Ascending aorta (tissue), 2 donors: ENCODE measurements at regions of chr9 and their contacts with region 1.

Region 1: GRCh38 chr9:37422289-37423104 is at the start of gene GRHPR:
- DNase-seq: peak; percentile 52 to 92
- H3K4me3 ChIP-seq: peak within 1 kb of the TSS; percentile 80 to 88
- H3K27ac ChIP-seq: peak within 1 kb of the TSS; percentile 77 to 86
- H3K4me1 ChIP-seq: peaks cover 8 to 18% of the 10 kb centered on the region in 2 donors
- H3K27me3 ChIP-seq: no peaks in the 10 kb centered on the region
- CTCF ChIP-seq: no peak
- total RNA-seq, gene GRHPR: 131 TPM

Region 2: GRCh38 chr9:36400332-36401163 is 1021.9 kb before region 1 on chr9:
- intact Hi-C with region 1: loop called (anchors 10 kb)
- DNase-seq: peak; percentile 38 to 90
- H3K4me3 ChIP-seq: peak overlapping the region; percentile 64 to 79
- H3K27ac ChIP-seq: peak overlapping the region; percentile 87 to 94
- H3K4me1 ChIP-seq: peaks cover 0 to 9% of the 10 kb centered on the region in 2 donors
- H3K27me3 ChIP-seq: no peaks in the 10 kb centered on the region
- CTCF ChIP-seq: peak in 1 of 3 experiments; percentile 17

Region 3: GRCh38 chr9:37079370-37080164 is 342.9 kb before region 1 on chr9:
- intact Hi-C with region 1: no loop called
- DNase-seq: peak; percentile 74 to 96
- H3K4me3 ChIP-seq: peak overlapping the region; percentile 85 to 88
- H3K27ac ChIP-seq: peak overlapping the region; percentile 90 to 91
- H3K4me1 ChIP-seq: no peaks in the 10 kb centered on the region
- H3K27me3 ChIP-seq: no peaks in the 10 kb centered on the region
- CTCF ChIP-seq: no peak

Region 4: DNA sequence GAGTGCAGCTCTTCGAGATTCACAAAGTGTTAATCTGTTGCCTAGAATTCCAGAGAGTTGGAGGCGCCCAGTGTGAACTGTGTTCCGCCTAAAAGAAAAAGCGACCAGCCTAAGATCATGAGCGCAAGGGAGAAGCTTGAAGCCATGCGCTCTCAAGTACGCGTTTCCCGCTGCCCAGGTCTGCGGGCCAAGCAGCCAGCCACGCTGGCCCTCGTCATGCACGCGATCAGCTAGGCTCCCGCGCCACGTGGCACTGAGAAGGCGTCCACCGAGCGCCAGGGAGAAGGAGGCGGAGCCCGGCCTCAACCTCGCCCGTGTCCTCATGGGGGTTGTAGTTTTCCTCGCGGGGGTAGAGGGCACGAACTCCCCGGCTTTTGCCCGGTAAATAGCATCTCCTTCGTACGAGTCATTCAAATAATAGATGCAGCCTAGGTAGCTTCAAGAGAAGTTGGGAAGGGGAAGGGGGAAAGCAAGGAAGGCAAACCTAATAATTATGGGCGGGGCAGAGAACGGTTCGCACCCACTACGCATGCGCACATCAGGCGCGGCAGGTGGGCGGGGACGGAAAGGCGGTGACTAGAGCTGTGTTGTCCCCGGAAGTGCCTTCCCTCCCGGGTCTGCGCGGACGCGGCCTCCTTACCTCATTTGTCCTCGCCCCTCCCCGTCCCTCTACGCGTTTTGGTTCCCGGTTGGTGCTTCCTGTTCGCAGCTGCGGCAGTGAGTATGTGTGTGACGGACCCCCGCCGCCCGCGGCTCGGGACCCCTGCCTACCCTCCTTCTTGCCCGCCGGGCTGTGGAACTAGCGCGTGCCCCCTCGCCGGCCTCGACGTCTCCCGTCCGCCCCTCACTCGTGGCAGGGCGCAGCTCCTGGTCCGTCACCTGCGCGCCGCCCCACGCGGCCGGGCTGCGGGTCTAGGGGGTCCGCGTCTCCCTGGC is 302.3 kb before region 1 on chr9 and contains the start of gene ZCCHC7:
- intact Hi-C with region 1: loop called (anchors 10 kb)
- DNase-seq: peak; percentile 82 to 98
- H3K4me3 ChIP-seq: peak within 1 kb of the TSS; percentile 88 to 95
- H3K27ac ChIP-seq: peak within 1 kb of the TSS; percentile 95 to 96
- H3K4me1 ChIP-seq: peaks cover 0 to 13% of the 10 kb centered on the region in 2 donors
- H3K27me3 ChIP-seq: no peaks in the 10 kb centered on the region
- CTCF ChIP-seq: no peak
- total RNA-seq, gene ZCCHC7: 25.1 TPM

Region 5: DNA sequence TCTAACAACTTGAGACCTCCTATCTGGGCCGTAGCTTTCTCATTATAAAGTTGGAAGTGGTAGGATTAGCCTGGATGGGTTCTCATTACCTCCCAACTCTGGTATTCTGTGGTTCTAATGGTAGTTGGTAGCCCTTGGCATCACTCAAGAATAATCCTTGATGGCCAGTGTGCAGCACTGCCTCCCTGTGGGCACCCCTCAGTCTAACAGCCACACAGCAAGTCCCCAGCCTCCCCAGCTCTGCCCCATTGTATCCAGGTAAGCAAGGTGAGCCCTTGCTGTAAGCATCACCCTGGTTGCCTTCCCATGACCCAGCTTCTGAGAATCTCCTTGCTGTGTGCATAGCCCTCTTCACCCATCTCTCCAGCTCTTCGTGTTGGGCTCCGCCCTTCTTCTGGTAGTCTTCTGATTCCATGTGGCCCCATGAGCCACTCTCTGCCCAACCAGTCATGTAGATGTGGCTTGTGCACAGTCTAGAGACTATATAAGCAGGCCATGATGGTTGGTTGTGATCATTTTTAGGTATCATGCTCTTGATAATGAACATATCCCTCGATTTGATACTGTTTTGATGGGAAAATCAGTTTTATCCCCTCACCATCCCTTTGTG is 57.6 kb before region 1 on chr9:
- intact Hi-C with region 1: loop called (anchors 10 kb)
- DNase-seq: no peak
- H3K4me3 ChIP-seq: no peak overlapping the region
- H3K27ac ChIP-seq: no peak overlapping the region
- H3K4me1 ChIP-seq: no peaks in the 10 kb centered on the region
- H3K27me3 ChIP-seq: no peaks in the 10 kb centered on the region
- CTCF ChIP-seq: no peak

Region 6: GRCh38 chr9:37471942-37472679 is 49.6 kb after region 1 on chr9:
- intact Hi-C with region 1: no loop called
- DNase-seq: no peak
- H3K4me3 ChIP-seq: peak overlapping the region; percentile 18 to 52
- H3K27ac ChIP-seq: peak overlapping the region; percentile 80 to 84
- H3K4me1 ChIP-seq: no peaks in the 10 kb centered on the region
- H3K27me3 ChIP-seq: no peaks in the 10 kb centered on the region
- CTCF ChIP-seq: no peak

Region 7: DNA sequence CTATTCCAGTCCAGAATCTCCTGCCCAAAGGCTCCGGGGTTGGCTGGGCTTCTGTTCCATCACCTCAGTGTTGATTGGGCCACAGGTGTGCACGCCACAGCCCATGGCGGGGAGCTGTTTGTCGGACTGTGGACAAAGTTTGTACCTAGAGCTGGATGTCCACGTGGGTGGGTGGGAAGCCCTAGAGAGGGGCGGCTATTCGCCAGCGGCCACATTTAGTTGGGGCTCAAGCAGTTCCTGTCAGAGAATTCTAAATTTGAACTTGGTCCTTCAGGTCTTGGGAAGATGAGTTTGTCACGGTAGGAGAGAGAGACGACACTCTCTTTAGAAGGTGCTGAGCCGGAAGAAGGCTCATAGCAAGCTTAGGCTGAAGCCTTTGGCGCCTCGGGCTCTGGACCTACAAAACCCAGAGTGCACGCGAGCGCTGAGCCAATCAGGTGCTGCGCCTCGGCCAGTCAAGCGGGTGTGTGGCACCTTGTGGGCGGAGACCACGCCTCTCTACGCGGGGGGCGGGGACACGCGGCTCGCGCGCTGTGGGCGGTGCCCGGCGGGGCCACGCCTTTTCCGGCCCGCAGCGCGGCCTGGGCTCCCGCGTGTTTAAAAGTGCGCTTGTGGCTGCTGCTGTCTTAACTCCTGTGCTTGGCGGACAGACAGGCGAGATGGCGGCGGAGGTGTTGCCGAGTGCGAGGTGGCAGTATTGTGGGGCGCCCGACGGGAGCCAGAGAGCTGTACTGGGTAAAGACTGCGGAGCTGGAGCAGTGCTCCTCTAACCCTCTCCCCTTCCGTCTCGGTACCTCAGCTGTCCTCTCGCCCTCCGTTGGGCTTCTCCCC is 63.1 kb after region 1 on chr9 and contains the start of gene POLR1E:
- intact Hi-C with region 1: loop called (anchors 1 kb)
- DNase-seq: peak; percentile 84 to 97
- H3K4me3 ChIP-seq: peak within 1 kb of the TSS; percentile 53 to 88
- H3K27ac ChIP-seq: peak within 1 kb of the TSS; percentile 88 to 94
- H3K4me1 ChIP-seq: peaks cover 12 to 19% of the 10 kb centered on the region in 2 donors
- H3K27me3 ChIP-seq: no peaks in the 10 kb centered on the region
- CTCF ChIP-seq: no peak
- total RNA-seq, gene POLR1E: 18.0 TPM

Region 8: DNA sequence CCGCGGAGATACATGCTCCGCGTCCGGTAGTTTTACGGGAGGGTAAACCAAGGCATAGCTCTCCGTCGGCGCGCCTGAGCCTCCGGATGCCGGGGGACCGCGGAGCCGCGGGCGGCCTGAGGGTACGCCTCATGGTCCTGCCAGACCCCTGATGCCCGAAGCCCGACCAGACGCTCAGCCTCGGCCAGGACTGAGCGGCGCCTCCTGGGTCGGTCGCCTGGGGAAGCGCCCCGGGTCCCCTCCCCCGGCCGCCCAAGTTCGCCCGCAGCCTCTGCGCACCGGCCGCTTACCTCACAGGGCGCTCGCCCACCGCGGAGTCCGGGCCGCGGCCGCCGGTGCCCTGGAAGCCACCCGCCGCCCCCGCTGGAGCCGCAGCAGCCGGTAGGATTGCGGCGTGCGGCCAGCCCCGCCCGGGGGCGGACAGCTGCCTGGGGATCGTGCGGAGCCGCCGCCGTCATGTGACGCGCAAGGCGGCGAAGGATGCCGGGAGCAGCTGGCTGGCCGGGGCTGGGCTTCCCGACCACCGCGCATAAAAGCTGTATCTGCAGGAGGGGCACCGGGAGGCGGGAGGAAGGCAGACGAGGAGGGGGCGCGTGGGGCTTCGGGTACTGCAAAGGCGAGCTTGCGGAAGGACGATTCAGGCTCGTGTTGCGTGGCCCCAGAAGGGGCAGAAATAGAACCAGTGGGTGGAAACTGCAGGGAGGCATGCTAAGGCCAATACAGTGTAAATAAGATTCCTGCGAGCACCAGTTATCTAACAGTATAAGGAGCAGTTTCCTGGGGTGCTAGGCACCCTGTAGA is 153.6 kb after region 1 on chr9 and contains the start of gene FBXO10:
- intact Hi-C with region 1: loop called (anchors 10 kb)
- DNase-seq: peak in 1 of 2 donors; percentile 82
- H3K4me3 ChIP-seq: peak within 1 kb of the TSS; percentile 69 to 79
- H3K27ac ChIP-seq: peak within 1 kb of the TSS; percentile 76 to 78
- H3K4me1 ChIP-seq: peaks cover 0 to 7% of the 10 kb centered on the region in 2 donors
- H3K27me3 ChIP-seq: no peaks in the 10 kb centered on the region
- CTCF ChIP-seq: no peak
- total RNA-seq, gene FBXO10: 8.2 TPM

Region 9: DNA sequence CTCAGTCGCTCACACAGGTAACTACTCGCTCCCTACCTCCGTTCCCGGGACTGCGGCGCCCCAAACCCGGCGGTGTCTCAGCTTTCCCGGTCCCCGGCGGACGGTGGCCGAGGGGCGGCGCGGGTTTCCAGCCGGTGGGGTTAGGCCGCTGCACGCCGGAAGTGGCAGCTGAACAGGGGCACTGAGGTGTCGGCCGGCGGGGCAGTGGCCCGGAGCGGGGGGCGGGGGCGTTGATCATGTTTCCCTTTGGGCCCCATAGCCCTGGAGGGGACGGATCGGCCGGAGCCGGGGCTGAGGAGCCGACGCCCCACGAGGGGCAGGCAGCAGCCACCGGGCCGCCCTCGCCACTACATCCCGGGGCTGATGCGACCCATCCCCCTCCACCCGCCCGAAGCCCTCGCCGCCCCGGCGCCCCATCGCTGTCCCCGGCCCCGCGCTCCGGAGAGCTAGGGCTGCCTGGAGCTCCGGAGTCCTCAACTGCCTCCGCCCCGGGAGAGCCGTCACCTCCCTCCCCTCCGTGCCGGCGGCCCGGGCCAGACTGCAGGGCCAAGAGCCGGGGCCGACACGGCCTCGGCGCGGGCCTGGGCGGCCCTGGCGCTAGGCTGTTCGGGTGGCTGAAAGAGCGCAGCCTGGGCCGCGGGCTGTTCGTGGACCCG is 378.3 kb after region 1 on chr9 and contains the start of gene DCAF10:
- intact Hi-C with region 1: loop called (anchors 10 kb)
- DNase-seq: peak in 1 of 2 donors; percentile 92
- H3K4me3 ChIP-seq: peak within 1 kb of the TSS; percentile 86 to 97
- H3K27ac ChIP-seq: peak within 1 kb of the TSS; percentile 87 to 89
- H3K4me1 ChIP-seq: peaks cover 0 to 22% of the 10 kb centered on the region in 2 donors
- H3K27me3 ChIP-seq: no peaks in the 10 kb centered on the region
- CTCF ChIP-seq: peak in 1 of 3 experiments; percentile 19
- total RNA-seq, gene DCAF10: 23.5 TPM